K562 (cell line): ENCODE measurements at regions of chr5 and their contacts with region 1.

Region 1: DNA sequence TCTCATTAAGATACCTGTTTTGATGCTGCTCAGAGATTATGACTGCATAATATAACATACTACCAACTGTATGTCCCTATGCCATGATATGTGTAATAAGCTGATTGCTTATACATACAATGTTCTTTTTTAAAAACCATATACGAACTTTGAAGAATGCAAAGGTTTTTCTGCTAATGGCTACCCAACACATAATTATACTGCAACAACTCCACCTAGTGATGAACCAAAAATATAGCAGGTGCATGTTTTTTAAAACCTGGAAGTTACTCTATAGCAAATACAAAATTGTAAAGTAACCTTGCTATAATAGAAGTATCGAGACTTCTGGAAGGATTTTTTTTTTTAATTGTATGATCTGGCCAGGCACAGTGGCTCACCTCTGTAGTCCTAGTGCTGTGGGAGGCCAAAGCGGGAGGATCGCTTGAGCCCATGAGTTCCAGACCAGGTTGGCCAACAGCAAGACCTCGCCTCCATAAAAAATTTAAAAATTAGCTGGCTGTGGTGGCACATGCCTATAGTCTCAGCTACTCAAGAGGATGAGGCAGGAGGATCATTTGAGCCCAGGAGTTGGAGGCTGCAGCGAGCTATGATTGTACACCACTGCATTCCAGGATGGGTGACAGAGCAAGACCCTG is 49.1 kb downstream of the HOMER1 start:
- DNase-seq: peak in 3 of 4 experiments; percentile 12 to 37 (median 16)
- ATAC-seq: peak; percentile 82
- H3K4me3 ChIP-seq: no peak overlapping the region
- H3K27ac ChIP-seq: no peak overlapping the region
- H3K4me1 ChIP-seq: no peaks in the 10 kb centered on the region
- H3K27me3 ChIP-seq: no peaks in the 10 kb centered on the region
- CTCF ChIP-seq: peak; percentile 30 to 79 (median 49); a peak in 4 of 6 replicates
- EP300 ChIP-seq: no peak
- POLR2A ChIP-seq: no peak
- RAD21 ChIP-seq: peak; percentile 81

Region 2: GRCh38 chr5:79255786-79256557 is 208.8 kb before region 1 on chr5:
- CTCF ChIA-PET with region 1: interaction called, 5 read pairs
- POLR2A ChIA-PET with region 1: no interaction called
- in situ Hi-C with region 1: no loop called
- intact Hi-C with region 1: loop called (anchors 2 kb)
- DNase-seq: peak in 3 of 4 experiments; percentile 27 to 48 (median 27)
- ATAC-seq: peak; percentile 78
- H3K4me3 ChIP-seq: no peak overlapping the region
- H3K27ac ChIP-seq: peak overlapping the region; percentile 41; the same call in 1 of the 3 replicates
- H3K4me1 ChIP-seq: peaks cover 6 to 10% of the 10 kb centered on the region in 2 experiments; a peak in 3 of 5 replicates
- H3K27me3 ChIP-seq: no peaks in the 10 kb centered on the region
- CTCF ChIP-seq: peak; percentile 42 to 74 (median 64); a peak in 5 of 6 replicates
- EP300 ChIP-seq: no peak
- POLR2A ChIP-seq: no peak
- RAD21 ChIP-seq: peak in 1 of 2 experiments; percentile 59; a peak in 2 of 4 replicates

Region 3: DNA sequence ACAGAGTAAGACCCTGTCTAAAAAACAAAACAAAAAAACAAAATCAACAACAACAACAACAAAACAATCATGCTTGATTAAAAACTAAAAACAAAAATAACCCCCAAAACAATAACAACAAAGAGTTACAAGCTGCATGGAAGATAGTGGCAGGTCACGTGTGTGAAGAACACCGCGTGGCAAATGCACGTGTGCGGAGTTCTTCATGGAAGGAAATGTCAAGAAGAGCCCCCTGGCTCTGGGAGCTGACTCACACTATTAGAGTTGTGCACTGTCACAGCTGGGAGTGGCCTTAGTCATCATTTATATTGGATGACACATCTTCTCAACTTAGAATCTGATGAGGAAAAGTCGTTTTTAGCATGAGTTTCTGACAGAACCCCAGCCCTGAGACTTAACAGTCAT is 118.4 kb before region 1 on chr5:
- CTCF ChIA-PET with region 1: no interaction called
- POLR2A ChIA-PET with region 1: no interaction called
- in situ Hi-C with region 1: no loop called
- intact Hi-C with region 1: loop called (anchors 10 kb)
- DNase-seq: peak; percentile 54 to 65 (median 60)
- ATAC-seq: peak; percentile 93
- H3K4me3 ChIP-seq: no peak overlapping the region
- H3K27ac ChIP-seq: no peak overlapping the region
- H3K4me1 ChIP-seq: peaks cover 0 to 8% of the 10 kb centered on the region in 2 experiments; a peak in 2 of 5 replicates
- H3K27me3 ChIP-seq: no peaks in the 10 kb centered on the region; a peak in 2 of 5 replicates
- CTCF ChIP-seq: no peak
- EP300 ChIP-seq: no peak; the same call in 1 of the 2 replicates
- POLR2A ChIP-seq: no peak
- RAD21 ChIP-seq: no peak

Region 4: DNA sequence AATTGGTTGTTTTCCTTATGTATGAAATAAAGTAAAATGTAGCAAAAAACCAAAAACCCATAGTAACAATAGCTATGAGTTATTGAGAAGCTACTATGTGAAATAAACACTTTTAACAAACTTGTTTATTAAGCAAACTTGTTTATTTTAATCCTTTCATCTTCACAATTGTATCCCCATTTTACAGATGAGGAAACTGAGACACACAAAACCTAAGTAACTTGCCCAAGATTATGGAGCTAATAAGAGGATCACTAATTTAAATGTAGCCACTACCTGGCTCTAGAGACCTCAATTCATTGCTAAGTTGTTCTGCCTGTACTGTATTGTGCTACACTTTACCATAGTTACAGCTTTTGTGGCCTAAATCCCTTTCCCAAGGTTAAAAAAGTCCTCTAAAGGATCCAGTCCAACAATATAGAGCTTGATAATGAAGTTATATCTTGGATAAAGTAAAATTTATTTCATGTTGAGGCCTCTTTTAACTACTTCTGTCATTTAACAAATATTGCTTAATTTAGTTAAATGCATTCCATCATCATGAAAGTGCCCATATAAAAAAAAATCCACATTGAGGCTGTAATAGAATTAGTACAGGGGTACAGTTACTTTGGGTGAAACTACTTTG is 27.0 kb after region 1 on chr5:
- CTCF ChIA-PET with region 1: no interaction called
- POLR2A ChIA-PET with region 1: no interaction called
- in situ Hi-C with region 1: no loop called
- intact Hi-C with region 1: no loop called
- DNase-seq: no peak
- ATAC-seq: no peak
- H3K4me3 ChIP-seq: no peak overlapping the region
- H3K27ac ChIP-seq: no peak overlapping the region
- H3K4me1 ChIP-seq: no peaks in the 10 kb centered on the region
- H3K27me3 ChIP-seq: no peaks in the 10 kb centered on the region
- CTCF ChIP-seq: no peak
- EP300 ChIP-seq: no peak
- POLR2A ChIP-seq: no peak
- RAD21 ChIP-seq: no peak

Region 5: GRCh38 chr5:79546782-79547428 is 82.1 kb after region 1 on chr5:
- CTCF ChIA-PET with region 1: no interaction called
- POLR2A ChIA-PET with region 1: no interaction called
- in situ Hi-C with region 1: no loop called
- intact Hi-C with region 1: no loop called
- DNase-seq: peak in 2 of 4 experiments; percentile 26 to 45
- ATAC-seq: peak; percentile 83
- H3K4me3 ChIP-seq: no peak overlapping the region
- H3K27ac ChIP-seq: peak overlapping the region; percentile 53
- H3K4me1 ChIP-seq: peaks cover 0 to 12% of the 10 kb centered on the region in 2 experiments; a peak in 3 of 5 replicates
- H3K27me3 ChIP-seq: no peaks in the 10 kb centered on the region
- CTCF ChIP-seq: no peak
- EP300 ChIP-seq: no peak
- POLR2A ChIP-seq: no peak
- RAD21 ChIP-seq: no peak

Region 6: GRCh38 chr5:79590396-79590999 is 125.7 kb after region 1 on chr5:
- CTCF ChIA-PET with region 1: no interaction called
- POLR2A ChIA-PET with region 1: no interaction called
- in situ Hi-C with region 1: no loop called
- intact Hi-C with region 1: no loop called
- DNase-seq: no peak
- ATAC-seq: no peak
- H3K4me3 ChIP-seq: no peak overlapping the region
- H3K27ac ChIP-seq: no peak overlapping the region
- H3K4me1 ChIP-seq: peaks cover 8 to 17% of the 10 kb centered on the region in 2 experiments; a peak in 4 of 5 replicates
- H3K27me3 ChIP-seq: no peaks in the 10 kb centered on the region
- CTCF ChIP-seq: no peak
- EP300 ChIP-seq: no peak
- POLR2A ChIP-seq: no peak
- RAD21 ChIP-seq: no peak

Region 7: DNA sequence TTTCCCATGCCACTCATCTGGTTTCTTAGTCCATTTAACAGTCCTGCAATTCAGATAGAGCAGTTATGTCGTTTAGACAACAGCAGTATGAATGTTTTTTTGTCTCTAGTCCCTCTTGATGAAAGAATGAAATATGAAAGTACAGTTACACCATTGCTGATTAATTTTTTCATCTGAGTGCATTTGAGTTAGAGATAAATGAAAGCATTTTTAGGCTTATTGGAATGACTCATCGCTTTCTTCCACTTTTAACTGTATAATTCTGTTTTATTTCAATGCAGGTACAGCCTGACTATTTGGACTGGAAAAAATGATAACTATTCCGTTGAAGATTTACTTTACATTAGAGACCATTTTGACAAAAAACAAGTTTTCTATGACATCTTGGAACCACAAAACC is 1076.6 kb after region 1 on chr5:
- CTCF ChIA-PET with region 1: no interaction called
- POLR2A ChIA-PET with region 1: no interaction called
- in situ Hi-C with region 1: no loop called
- intact Hi-C with region 1: no loop called
- DNase-seq: no peak
- ATAC-seq: no peak
- H3K4me3 ChIP-seq: no peak overlapping the region
- H3K27ac ChIP-seq: no peak overlapping the region
- H3K4me1 ChIP-seq: no peaks in the 10 kb centered on the region
- H3K27me3 ChIP-seq: peaks cover 0 to 8% of the 10 kb centered on the region in 2 experiments; a peak in 2 of 5 replicates
- CTCF ChIP-seq: no peak
- EP300 ChIP-seq: no peak
- POLR2A ChIP-seq: no peak
- RAD21 ChIP-seq: no peak